ENCODE measurements at regions of chr12 and their contacts with region 1.

Region 1: DNA sequence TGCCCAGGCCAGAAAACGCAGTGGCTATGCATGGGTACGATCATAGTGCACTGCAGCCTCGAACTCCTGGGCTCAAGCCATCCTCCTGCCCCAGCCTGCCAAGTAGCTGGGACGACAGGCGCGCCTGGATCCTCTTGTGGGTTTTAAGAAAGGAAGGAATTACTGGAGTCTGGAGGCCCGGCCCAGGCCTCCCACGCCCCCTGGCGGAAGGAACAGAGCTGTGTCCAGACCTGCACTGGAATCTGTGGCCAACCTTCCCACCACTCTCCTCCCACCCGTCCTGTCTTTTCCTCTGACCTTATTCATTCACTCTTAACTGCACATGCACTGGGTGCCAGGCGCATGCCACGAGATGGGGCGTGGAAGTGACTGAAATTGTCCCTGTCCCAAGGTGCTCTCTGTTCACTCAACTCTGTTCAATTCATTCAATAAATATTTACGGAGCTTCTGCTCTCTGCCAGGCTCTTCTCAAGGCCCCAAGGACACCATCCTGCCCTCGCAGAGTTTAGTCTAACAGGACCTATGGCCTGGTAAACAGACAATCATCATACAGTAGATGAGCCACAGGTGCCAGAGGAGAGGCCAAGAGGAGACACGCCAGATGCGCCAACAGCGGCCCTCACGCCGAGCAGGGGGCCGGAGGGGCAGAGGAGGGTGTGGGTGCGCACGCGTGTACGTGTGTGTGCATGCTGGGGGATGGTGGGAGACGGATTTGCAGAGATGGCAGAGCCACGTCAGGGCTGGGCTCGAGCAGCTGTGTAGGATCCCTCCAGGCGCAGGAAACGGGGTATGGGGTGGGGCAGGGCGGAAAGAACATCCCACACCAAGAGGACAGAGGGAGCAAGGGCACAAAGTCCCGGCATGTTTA is 13.7 kb upstream of the TMEM106C start:
- DNase-seq: peak; percentile 72
- ATAC-seq: peak; percentile 90
- H3K4me3 ChIP-seq: no peak overlapping the region
- H3K27ac ChIP-seq: no peak overlapping the region
- H3K4me1 ChIP-seq: peaks cover 12% of the 10 kb centered on the region
- H3K27me3 ChIP-seq: peaks cover 20% of the 10 kb centered on the region
- CTCF ChIP-seq: peak; percentile 88
- POLR2A ChIP-seq: no peak
- RAD21 ChIP-seq: peak; percentile 88

Region 2: GRCh38 chr12:47517122-47517521 is 432.6 kb before region 1 on chr12:
- CTCF ChIA-PET with region 1: no interaction called
- POLR2A ChIA-PET with region 1: no interaction called
- dilution Hi-C with region 1: no loop called
- in situ Hi-C with region 1: no loop called
- intact Hi-C with region 1: no loop called
- DNase-seq: no peak
- ATAC-seq: no peak
- H3K4me3 ChIP-seq: no peak overlapping the region
- H3K27ac ChIP-seq: no peak overlapping the region
- H3K4me1 ChIP-seq: no peaks in the 10 kb centered on the region
- H3K27me3 ChIP-seq: no peaks in the 10 kb centered on the region
- CTCF ChIP-seq: no peak
- POLR2A ChIP-seq: no peak
- RAD21 ChIP-seq: no peak

Region 3: DNA sequence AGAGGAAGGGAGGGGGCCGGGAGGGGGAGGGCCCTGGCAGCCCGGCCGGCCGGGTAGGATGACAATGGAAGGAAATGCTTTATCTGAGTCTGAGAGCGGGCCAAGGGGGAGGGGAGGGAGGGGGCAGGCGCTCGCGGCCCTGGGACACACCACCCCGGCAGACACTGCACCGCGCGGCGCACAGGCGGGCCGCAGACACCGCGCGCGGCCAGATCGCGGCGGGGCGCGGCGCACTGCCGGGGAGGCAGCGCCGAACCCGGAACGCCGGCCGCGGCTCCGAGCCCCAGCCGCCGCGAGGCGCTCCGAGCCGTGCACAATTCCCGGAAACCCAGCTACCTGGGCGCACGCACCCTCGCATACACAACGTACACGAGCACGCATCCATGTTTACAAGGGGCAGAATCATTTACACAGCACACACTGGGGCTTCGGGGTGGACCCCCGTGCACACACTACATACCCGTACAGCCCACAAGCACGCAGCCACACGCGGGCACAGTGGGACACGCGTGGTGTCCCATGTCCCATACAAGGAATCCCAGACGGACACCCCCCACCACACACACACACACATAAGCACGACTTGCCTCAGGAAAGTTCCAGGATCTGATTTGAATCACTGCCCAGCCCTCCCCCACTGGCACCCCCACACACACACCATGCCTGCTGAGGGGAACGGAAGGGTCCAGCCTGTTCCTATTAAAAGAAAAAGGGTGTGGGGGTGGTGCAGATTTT is 129.6 kb before region 1 on chr12 and contains the start of gene HDAC7:
- CTCF ChIA-PET with region 1: no interaction called
- POLR2A ChIA-PET with region 1: no interaction called
- dilution Hi-C with region 1: no loop called
- in situ Hi-C with region 1: no loop called
- intact Hi-C with region 1: loop called (anchors 1 kb)
- DNase-seq: peak; percentile 72
- ATAC-seq: peak; percentile 53
- H3K4me3 ChIP-seq: peak within 1 kb of the TSS; percentile 91
- H3K27ac ChIP-seq: peak within 1 kb of the TSS; percentile 99
- H3K4me1 ChIP-seq: peaks cover 37% of the 10 kb centered on the region
- H3K27me3 ChIP-seq: no peaks in the 10 kb centered on the region
- CTCF ChIP-seq: no peak
- POLR2A ChIP-seq: no peak; the same call in 1 of the 2 replicates
- RAD21 ChIP-seq: peak; percentile 8; the same call in 1 of the 2 replicates
- total RNA-seq, gene HDAC7: 10.4 and 10.6 TPM in 2 replicates

Region 4: DNA sequence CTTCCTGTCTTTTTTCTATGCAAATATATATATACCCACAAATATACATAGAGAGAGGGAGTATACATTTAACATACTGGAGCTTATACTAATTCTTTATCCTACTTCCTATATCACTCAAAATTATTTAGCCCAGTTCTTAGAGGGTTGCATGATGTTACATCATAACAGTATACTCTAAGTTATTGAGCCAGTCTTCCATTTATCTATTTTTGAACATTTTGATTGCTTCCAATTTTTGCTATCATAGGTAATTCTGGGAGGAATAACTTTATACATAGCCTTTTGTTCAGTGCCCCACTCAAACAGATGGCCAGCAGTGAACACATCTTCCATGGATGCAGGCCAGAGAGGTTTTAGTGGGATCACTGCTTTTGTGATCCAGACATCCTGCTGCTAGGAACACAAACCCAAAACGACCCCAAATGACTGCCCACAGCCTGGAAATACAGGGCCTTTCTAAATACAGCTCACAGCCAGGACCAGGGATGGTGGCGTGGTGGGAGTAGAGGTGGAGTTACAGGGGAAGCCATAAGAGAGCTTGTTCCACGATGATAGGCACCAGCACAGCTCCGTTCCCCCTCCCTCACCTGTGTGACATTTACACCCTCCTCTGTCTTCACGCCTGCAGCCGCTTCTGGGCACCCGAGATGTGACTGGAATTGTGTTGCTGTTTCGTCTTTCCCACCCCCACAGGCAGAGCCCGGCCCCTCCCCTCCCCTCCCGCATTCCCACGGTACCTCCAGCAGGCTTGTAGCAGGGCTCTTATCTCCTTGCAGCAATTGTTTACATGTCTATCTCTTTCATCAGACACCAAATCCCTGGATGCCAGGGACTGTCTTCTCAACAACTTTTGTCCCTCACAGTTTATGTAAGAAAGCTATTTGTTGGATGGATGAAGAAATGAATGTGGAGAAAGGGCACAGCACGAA is 99.3 kb before region 1 on chr12:
- CTCF ChIA-PET with region 1: interaction called, 3 read pairs
- POLR2A ChIA-PET with region 1: no interaction called
- dilution Hi-C with region 1: no loop called
- in situ Hi-C with region 1: no loop called
- intact Hi-C with region 1: loop called (anchors 5 kb)
- DNase-seq: peak; percentile 83
- ATAC-seq: peak; percentile 79
- H3K4me3 ChIP-seq: no peak overlapping the region
- H3K27ac ChIP-seq: peak overlapping the region; percentile 46; the same call in 1 of the 2 replicates
- H3K4me1 ChIP-seq: peaks cover 21% of the 10 kb centered on the region
- H3K27me3 ChIP-seq: no peaks in the 10 kb centered on the region
- CTCF ChIP-seq: no peak
- POLR2A ChIP-seq: no peak
- RAD21 ChIP-seq: no peak

Region 5: GRCh38 chr12:48197971-48198671 is 248.4 kb after region 1 on chr12:
- CTCF ChIA-PET with region 1: no interaction called
- POLR2A ChIA-PET with region 1: no interaction called
- dilution Hi-C with region 1: no loop called
- in situ Hi-C with region 1: no loop called
- intact Hi-C with region 1: no loop called
- DNase-seq: peak; percentile 87
- ATAC-seq: peak; percentile 92
- H3K4me3 ChIP-seq: peak overlapping the region; percentile 55
- H3K27ac ChIP-seq: peak overlapping the region; percentile 77
- H3K4me1 ChIP-seq: peaks cover 6% of the 10 kb centered on the region; the same call in 1 of the 2 replicates
- H3K27me3 ChIP-seq: peaks cover 7% of the 10 kb centered on the region
- CTCF ChIP-seq: 0 out of 2 replicates have a peak, but pooled peaks have one; percentile 12
- POLR2A ChIP-seq: peak; percentile 67
- RAD21 ChIP-seq: no peak

Region 6: DNA sequence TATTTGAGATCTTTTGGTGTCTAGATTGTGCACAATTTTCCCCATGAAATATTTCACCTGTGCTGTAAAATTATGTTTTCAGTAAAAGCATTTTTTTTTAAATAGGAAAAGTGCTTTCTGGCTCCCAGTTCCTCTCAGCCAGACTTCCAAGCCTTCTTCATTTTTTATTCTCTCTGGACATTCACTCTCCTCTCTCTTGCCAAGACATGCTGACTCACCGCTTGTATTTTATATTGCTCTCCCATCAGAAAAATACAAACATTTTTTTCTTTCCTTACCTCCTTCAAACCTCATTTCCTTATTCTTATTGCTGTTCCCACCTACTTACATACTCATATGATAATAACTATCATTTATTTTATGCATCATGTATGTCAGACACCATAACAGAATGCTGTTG is 438.8 kb after region 1 on chr12:
- CTCF ChIA-PET with region 1: no interaction called
- POLR2A ChIA-PET with region 1: no interaction called
- dilution Hi-C with region 1: no loop called
- in situ Hi-C with region 1: no loop called
- intact Hi-C with region 1: no loop called
- DNase-seq: peak; percentile 6
- ATAC-seq: no peak
- H3K4me3 ChIP-seq: no peak overlapping the region
- H3K27ac ChIP-seq: no peak overlapping the region
- H3K4me1 ChIP-seq: no peaks in the 10 kb centered on the region
- H3K27me3 ChIP-seq: no peaks in the 10 kb centered on the region
- CTCF ChIP-seq: no peak
- POLR2A ChIP-seq: no peak
- RAD21 ChIP-seq: no peak